Sigmoid colon (tissue), 7 donors: ENCODE measurements at regions of chr17 and their contacts with region 1.

Region 1: DNA sequence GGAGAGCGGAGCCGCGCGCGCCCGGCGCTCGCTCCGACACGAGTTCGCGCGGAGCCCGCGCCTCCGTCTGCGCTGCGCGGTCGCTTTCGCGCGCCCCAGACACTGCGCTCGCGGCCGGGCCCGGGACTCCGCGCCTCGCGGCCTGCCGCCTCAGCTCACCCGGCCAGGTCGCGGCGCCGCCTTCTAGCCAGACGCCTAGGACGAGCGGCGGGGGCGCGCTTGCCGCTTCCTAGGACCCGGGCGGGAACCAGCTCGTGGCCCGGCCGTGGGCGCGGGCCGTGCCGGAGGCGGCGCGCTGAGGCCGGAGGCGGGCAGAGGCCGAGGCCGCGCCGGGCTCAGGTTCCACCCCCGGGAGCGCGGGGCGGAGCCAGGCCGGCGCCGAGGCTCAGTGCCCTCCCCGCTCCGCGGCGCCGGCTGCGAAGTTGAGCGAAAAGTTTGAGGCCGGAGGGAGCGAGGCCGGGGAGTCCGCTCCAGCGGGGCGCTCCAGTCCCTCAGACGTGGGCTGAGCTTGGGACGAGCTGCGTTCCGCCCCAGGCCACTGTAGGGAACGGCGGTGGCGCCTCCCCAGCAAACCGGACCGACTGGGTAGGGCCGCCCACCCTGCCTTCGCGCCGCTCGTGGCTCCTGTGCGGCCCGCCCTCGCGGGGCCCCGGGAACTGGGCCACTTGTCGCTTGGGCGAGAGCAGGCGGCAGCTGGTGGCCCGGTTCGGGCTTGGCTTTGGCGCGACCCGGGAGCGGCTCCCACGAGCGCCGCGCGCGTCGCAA is at the start of gene SPHK1:
- DNase-seq: peak; percentile 78
- H3K4me3 ChIP-seq: peak within 1 kb of the TSS; percentile 32 to 62 (median 55)
- H3K27ac ChIP-seq: peak within 1 kb of the TSS; percentile 75 to 86 (median 76)
- H3K4me1 ChIP-seq: peaks cover 0 to 46% (median 44%) of the 10 kb centered on the region in 4 donors
- H3K27me3 ChIP-seq: peaks cover 7 to 32% (median 14%) of the 10 kb centered on the region in 3 donors
- CTCF ChIP-seq: peak in 1 of 4 experiments; percentile 5
- EP300 ChIP-seq: no peak
- POLR2A ChIP-seq: no peak
- total RNA-seq, gene SPHK1: 5.4 to 8.3 (median 7.7) TPM

Region 2: GRCh38 chr17:76353599-76354316 is 30.6 kb before region 1 on chr17 and contains the start of gene PRPSAP1:
- intact Hi-C with region 1: loop called (anchors 1 kb)
- DNase-seq: peak; percentile 92
- H3K4me3 ChIP-seq: peak within 1 kb of the TSS; percentile 72 to 98 (median 86)
- H3K27ac ChIP-seq: peak within 1 kb of the TSS; percentile 79 to 89 (median 86)
- H3K4me1 ChIP-seq: peaks cover 3 to 21% (median 18%) of the 10 kb centered on the region in 4 donors
- H3K27me3 ChIP-seq: no peaks in the 10 kb centered on the region
- CTCF ChIP-seq: peak in 3 of 4 experiments; percentile 27 to 42 (median 35)
- EP300 ChIP-seq: no peak
- POLR2A ChIP-seq: peak; percentile 61 to 75
- total RNA-seq, gene PRPSAP1: 39.0 to 70.3 (median 42.3) TPM

Region 3: GRCh38 chr17:76492989-76493501 is 108.6 kb after region 1 on chr17:
- intact Hi-C with region 1: no loop called
- DNase-seq: peak; percentile 87
- H3K4me3 ChIP-seq: peak overlapping the region in 1 of 4 donors; percentile 2
- H3K27ac ChIP-seq: peak overlapping the region; percentile 55 to 70 (median 66)
- H3K4me1 ChIP-seq: peaks cover 0 to 8% (median 6%) of the 10 kb centered on the region in 4 donors
- H3K27me3 ChIP-seq: no peaks in the 10 kb centered on the region
- CTCF ChIP-seq: no peak
- EP300 ChIP-seq: peak in 2 of 4 donors; percentile 36 to 50
- POLR2A ChIP-seq: no peak

Region 4: DNA sequence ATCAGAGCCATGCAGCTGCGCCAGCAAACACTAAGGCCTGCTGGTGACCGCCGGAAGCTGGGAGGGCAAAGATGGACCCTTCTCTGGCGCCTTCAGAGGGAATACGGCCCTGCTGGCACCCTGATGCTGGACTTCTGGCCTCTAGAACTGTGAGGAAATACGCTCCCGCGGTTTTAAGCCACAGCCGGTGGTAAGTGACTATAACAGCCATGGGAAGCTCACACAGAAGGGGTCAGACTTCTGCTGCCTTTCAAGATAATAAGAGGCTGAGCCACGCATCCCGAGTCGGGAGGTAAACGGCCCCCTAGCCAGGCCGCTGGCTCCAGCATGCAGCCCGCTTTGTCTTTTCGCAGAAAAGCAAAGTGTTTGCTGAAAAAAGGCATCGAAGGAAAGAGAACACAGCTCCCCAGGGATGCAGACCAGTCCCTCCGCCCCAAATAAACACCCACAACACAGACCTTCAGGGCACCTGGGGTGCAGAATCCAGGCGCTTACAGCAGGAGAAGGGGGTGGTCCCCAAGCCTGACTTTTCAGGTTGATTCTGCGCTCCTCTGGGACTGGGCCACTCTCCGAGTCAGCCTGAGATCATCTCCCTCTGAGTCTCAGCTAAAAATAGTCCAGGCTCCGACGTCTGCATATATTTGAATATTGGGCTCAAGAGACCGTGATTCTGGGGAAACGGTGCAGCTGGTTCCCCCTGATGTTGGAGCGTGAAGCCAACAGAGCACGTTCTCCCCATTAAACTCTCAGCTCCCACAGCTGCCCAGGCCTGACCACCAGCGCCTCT is 573.5 kb after region 1 on chr17:
- intact Hi-C with region 1: no loop called
- DNase-seq: no peak
- H3K4me3 ChIP-seq: no peak overlapping the region
- H3K27ac ChIP-seq: no peak overlapping the region
- H3K4me1 ChIP-seq: no peaks in the 10 kb centered on the region
- H3K27me3 ChIP-seq: peaks cover 0 to 16% (median 0%) of the 10 kb centered on the region in 3 donors
- CTCF ChIP-seq: no peak
- EP300 ChIP-seq: no peak
- POLR2A ChIP-seq: no peak